Ovary (tissue), 10 donors: ENCODE measurements at regions of chr15 and their contacts with region 1.

Region 1: GRCh38 chr15:95486224-95486623 is 844.3 kb upstream of the NR2F2 start:
- DNase-seq: no peak
- H3K4me3 ChIP-seq: no peak overlapping the region
- H3K27ac ChIP-seq: no peak overlapping the region
- H3K4me1 ChIP-seq: no peaks in the 10 kb centered on the region
- H3K27me3 ChIP-seq: no peaks in the 10 kb centered on the region
- CTCF ChIP-seq: no peak
- EP300 ChIP-seq: no peak
- POLR2A ChIP-seq: no peak

Region 2: DNA sequence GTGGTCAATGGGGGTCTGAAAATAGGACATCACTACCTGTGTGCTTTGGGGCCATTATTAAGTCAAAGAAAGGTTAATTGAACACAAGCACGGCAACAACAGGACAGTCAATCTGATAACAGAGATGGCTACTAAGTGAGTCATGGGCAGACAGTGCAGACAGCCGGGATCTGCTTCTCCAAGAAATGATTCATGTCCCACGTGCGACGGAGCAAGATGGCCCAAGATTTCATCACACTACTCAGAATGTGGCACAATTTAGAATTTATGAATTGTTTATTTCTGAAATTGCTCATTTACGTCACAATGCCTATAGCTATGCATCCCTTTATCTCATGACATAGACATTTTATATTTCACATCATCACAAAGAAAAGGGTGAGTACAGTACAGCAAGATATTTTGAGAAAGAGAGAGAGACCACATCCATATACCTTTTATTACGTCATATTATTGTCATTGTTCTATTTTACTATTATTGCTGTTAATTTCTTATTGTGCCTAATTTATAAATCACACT is 73.7 kb after region 1 on chr15:
- intact Hi-C with region 1: loop called in 1 of 4 experiments (anchors 10 kb)
- DNase-seq: no peak
- H3K4me3 ChIP-seq: no peak overlapping the region
- H3K27ac ChIP-seq: no peak overlapping the region
- H3K4me1 ChIP-seq: peaks cover 3% of the 10 kb centered on the region
- H3K27me3 ChIP-seq: no peaks in the 10 kb centered on the region
- CTCF ChIP-seq: no peak
- EP300 ChIP-seq: no peak
- POLR2A ChIP-seq: no peak

Region 3: DNA sequence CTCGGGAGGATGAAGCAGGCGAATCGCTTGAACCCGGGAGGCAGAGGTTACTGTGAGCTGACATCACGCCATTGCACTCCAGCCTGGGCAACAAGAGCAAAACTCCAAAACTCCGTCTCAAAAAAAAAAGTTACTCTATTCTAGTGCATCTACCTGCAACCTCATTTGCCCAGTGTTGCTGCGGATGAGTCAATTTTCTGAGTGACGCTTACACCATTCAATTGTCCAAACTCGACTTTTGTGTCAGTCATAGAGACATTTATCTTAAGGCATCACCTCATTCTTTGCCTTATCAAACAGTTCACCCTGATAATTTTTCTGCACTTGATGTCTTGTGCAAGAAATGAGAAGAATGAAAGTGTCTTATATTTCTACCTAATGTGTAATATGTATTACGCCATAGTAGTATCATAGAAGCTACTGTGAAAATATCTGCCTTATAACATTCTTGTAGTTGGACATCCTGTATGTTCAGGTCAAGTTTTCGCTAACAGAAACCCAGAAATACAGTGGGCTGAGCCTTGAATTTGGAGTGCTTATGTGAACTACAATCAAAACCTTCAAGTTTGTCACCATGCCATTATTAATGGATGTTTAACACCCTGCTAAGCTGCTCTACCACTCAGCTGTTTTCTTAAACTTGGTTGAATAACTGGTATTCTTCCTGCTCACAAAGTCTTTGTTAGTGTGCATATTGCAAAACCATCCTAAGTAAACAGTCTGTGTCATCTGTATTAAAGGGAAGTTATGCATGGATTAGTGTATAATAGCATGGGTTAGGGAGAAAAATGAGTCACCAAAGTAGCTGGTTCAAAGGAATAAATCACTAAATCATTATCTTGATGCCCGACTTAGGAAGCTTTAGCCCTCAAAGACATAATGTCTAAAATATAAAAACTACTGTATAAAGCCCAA is 313.3 kb after region 1 on chr15:
- intact Hi-C with region 1: no loop called
- DNase-seq: no peak
- H3K4me3 ChIP-seq: no peak overlapping the region
- H3K27ac ChIP-seq: no peak overlapping the region
- H3K4me1 ChIP-seq: peaks cover 4% of the 10 kb centered on the region
- H3K27me3 ChIP-seq: no peaks in the 10 kb centered on the region
- CTCF ChIP-seq: no peak
- EP300 ChIP-seq: no peak
- POLR2A ChIP-seq: no peak

Region 4: DNA sequence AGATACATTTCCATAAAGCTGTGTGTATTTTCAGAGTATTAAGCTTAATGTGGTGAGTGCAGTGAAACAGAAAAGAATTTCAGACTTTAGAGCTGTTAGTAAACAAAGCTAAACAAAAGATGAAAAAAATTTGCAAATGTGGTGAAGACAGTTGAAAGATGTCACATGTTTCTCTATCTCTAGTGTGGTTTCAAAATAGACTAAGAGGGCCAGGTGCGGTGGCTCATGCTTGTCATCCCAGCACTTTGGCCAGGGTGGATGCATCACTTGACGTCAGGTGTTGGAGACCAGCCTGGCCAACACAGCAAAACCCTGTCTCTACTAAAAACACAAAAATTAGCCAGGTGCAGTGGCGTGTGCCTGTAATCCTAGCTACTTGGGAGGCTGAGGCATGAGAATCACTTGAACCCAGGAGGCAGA is 378.3 kb after region 1 on chr15:
- intact Hi-C with region 1: no loop called
- DNase-seq: peak in 4 of 5 donors; percentile 54 to 68 (median 60)
- H3K4me3 ChIP-seq: no peak overlapping the region
- H3K27ac ChIP-seq: no peak overlapping the region
- H3K4me1 ChIP-seq: peaks cover 6% of the 10 kb centered on the region
- H3K27me3 ChIP-seq: no peaks in the 10 kb centered on the region
- CTCF ChIP-seq: no peak
- EP300 ChIP-seq: no peak
- POLR2A ChIP-seq: no peak